GM12878 (cell line): ENCODE measurements at regions of chr15 and their contacts with region 1.

Region 1: DNA sequence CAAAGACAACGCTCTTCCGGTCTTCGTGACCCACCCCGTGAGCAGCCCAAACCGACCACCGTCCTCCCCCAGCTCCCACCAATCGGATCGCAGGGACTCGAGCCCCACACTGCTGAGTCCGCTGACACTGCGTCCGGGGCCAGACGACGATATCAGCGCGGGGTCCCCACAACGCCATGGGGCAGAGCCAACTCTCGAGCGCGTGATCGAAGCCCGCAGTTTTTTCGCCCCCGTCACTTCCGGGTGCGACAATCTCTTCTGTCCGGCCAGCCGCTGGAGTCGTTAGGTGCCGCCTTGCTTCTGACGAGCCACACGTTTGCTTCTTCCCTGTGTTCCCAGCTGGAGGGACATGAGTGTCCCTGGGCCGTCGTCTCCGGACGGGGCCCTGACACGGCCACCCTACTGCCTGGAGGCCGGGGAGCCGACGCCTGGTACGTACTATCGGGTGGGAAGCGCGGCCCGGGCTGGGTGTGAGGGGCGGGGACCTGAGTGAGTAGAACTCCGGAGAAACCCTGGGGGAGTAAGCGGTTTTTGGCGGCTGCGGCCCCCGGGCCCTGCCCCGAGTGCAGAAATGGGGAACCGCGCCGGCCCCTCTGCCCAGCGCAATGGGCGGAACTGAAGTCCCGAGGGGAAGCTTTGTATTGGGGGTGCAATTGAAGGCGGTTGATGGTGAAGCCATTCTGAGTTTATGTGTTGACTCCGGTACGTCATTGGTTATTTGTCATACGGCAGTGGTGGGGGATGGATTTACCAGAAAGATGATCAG is at the start of gene BLOC1S6:
- DNase-seq: peak; percentile 74
- ATAC-seq: peak; percentile 93
- H3K4me3 ChIP-seq: peak within 1 kb of the TSS; percentile 97
- H3K27ac ChIP-seq: peak within 1 kb of the TSS; percentile 85
- H3K4me1 ChIP-seq: peaks cover 4% of the 10 kb centered on the region; the same call in 1 of the 2 replicates
- H3K27me3 ChIP-seq: no peaks in the 10 kb centered on the region
- CTCF ChIP-seq: no peak
- EP300 ChIP-seq: peak in 1 of 2 experiments; percentile 10; a peak in 1 of 4 replicates
- POLR2A ChIP-seq: peak; percentile 99
- RAD21 ChIP-seq: no peak
- polyA plus RNA-seq, gene BLOC1S6: 13.5 to 16.9 TPM

Region 2: GRCh38 chr15:45442500-45443135 is 144.7 kb before region 1 on chr15:
- CTCF ChIA-PET with region 1: no interaction called
- POLR2A ChIA-PET with region 1: no interaction called
- RAD21 ChIA-PET with region 1: no interaction called
- SMC1A ChIA-PET with region 1: no interaction called
- in situ Hi-C with region 1: no loop called
- intact Hi-C with region 1: no loop called
- DNase-seq: no peak
- ATAC-seq: no peak
- H3K4me3 ChIP-seq: no peak overlapping the region
- H3K27ac ChIP-seq: no peak overlapping the region
- H3K4me1 ChIP-seq: peaks cover 8% of the 10 kb centered on the region; the same call in 1 of the 2 replicates
- H3K27me3 ChIP-seq: no peaks in the 10 kb centered on the region
- CTCF ChIP-seq: no peak
- EP300 ChIP-seq: no peak
- POLR2A ChIP-seq: no peak
- RAD21 ChIP-seq: no peak

Region 3: GRCh38 chr15:45522328-45523160 is 64.7 kb before region 1 on chr15 and contains the start of gene SLC30A4:
- CTCF ChIA-PET with region 1: interaction called, 4 read pairs
- POLR2A ChIA-PET with region 1: interaction called, 4 read pairs
- RAD21 ChIA-PET with region 1: no interaction called
- SMC1A ChIA-PET with region 1: interaction called, 12 read pairs
- in situ Hi-C with region 1: no loop called
- intact Hi-C with region 1: loop called (anchors 5 kb)
- DNase-seq: no peak
- ATAC-seq: peak; percentile 89
- H3K4me3 ChIP-seq: peak within 1 kb of the TSS; percentile 56; the same call in 1 of the 2 replicates
- H3K27ac ChIP-seq: no peak within 1 kb of the TSS
- H3K4me1 ChIP-seq: peaks cover 4% of the 10 kb centered on the region; the same call in 1 of the 2 replicates
- H3K27me3 ChIP-seq: no peaks in the 10 kb centered on the region; a peak in 1 of 4 replicates
- CTCF ChIP-seq: peak in 2 of 3 experiments; percentile 25 to 28; a peak in 3 of 6 replicates
- EP300 ChIP-seq: no peak
- POLR2A ChIP-seq: peak; percentile 41; the same call in 1 of the 2 replicates
- RAD21 ChIP-seq: no peak
- polyA plus RNA-seq, gene SLC30A4: 0.16 to 0.29 TPM

Region 4: DNA sequence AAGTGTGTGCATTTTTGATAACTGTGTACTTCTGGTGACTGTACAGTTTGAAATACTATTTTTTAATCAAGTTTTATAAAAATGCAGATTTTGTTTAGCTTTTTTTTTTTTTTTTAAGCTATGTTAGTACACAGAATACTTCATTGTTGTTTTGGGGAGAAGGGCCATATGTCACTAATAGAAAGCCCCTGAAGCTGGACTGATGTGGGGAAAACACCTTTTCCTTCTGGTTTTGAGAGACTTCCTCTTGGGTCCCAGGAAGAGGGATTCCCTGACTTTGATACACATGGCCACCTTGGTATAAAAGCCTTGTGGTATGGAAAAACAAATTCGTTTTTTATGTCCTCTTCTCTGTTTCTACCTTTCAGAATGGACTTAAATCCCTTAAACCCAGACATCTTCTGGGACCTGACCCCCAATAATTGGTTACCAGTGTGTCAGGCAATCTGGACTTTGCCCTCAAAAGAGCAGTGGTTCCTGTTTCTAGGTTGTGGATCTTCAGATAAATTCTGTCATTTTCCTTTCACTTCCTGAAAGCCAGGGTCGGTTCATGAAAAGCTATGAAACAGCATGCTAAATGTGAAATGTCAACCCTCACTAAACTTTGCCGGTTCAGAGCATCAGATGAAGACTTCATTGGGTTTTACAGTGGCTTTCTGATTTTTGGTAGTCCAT is 31.2 kb before region 1 on chr15:
- CTCF ChIA-PET with region 1: interaction called, 7 read pairs
- POLR2A ChIA-PET with region 1: interaction called, 17 read pairs
- RAD21 ChIA-PET with region 1: interaction called, 20 read pairs
- SMC1A ChIA-PET with region 1: interaction called, 24 read pairs
- in situ Hi-C with region 1: no loop called
- intact Hi-C with region 1: no loop called
- DNase-seq: peak; percentile 13
- ATAC-seq: peak; percentile 90
- H3K4me3 ChIP-seq: no peak overlapping the region
- H3K27ac ChIP-seq: no peak overlapping the region
- H3K4me1 ChIP-seq: no peaks in the 10 kb centered on the region
- H3K27me3 ChIP-seq: no peaks in the 10 kb centered on the region
- CTCF ChIP-seq: no peak
- EP300 ChIP-seq: peak; percentile 20 to 59; a peak in 1 of 4 replicates
- POLR2A ChIP-seq: no peak
- RAD21 ChIP-seq: no peak

Region 5: DNA sequence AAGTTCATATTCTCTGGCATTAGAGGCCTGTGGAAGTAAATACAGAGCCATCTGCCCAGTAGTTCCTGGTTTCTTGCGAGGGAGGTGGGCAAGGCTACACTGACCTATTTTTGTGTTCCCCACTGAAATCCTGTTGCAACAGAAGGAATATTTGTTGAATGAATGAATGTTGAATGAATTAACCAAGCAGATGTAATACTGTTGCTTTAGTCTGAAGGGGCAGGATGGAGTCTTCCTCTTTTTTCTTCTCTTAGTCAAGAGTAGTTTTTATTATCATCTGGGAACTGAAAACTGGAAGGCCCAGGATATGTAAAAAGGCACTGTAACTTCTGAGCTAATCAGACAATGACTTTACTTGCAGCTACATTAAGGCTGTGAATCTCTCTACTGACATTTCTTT is 17.0 kb after region 1 on chr15:
- CTCF ChIA-PET with region 1: interaction called, 7 read pairs
- POLR2A ChIA-PET with region 1: interaction called, 5 read pairs
- RAD21 ChIA-PET with region 1: interaction called, 11 read pairs
- SMC1A ChIA-PET with region 1: interaction called, 35 read pairs
- in situ Hi-C with region 1: no loop called
- intact Hi-C with region 1: no loop called
- DNase-seq: no peak
- ATAC-seq: no peak
- H3K4me3 ChIP-seq: no peak overlapping the region
- H3K27ac ChIP-seq: peak overlapping the region; percentile 40
- H3K4me1 ChIP-seq: peaks cover 14% of the 10 kb centered on the region
- H3K27me3 ChIP-seq: no peaks in the 10 kb centered on the region
- CTCF ChIP-seq: no peak
- EP300 ChIP-seq: no peak
- POLR2A ChIP-seq: no peak
- RAD21 ChIP-seq: no peak

Region 6: DNA sequence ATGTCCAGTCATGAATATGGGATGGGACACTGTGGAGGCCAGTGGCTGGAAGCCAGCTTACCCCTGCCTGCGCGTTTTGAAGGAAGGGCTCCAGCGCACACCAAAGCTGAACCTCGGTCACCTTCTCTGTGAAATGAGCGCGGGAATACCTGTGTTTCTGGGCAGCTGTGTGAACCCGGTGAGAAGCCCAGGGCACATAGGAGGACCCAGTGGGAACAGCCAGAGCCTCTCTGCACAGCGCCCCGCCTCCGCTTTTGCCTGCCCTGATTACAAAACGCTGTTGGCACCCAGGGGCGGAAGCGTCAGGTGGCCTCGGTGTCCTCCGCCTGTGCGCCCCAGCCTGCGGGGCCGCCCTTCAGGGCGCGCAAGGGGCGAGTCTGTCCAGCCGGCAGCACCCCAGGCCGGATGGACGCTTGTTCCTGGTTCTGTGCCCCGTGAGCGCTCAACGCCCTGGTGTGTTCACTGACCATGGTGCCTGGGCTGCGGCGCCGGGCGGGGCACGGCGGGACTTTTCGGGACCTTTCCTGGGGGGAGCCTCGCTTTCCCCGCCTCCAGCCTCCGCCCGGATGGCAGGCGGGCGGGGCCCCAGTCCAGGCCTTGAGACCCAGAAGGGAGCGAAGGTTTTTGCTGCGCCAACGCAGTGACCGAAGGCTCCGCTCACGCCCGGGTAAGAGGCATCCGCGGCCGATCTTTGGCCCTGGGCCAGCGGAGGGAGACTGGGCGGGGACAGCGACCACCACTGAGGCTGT is 47.3 kb after region 1 on chr15 and contains the start of gene SQOR:
- CTCF ChIA-PET with region 1: interaction called, 3 read pairs
- POLR2A ChIA-PET with region 1: interaction called, 3 read pairs
- RAD21 ChIA-PET with region 1: interaction called, 5 read pairs
- SMC1A ChIA-PET with region 1: interaction called, 7 read pairs
- in situ Hi-C with region 1: no loop called
- intact Hi-C with region 1: loop called (anchors 2 kb)
- DNase-seq: peak; percentile 59
- ATAC-seq: peak; percentile 86
- H3K4me3 ChIP-seq: peak within 1 kb of the TSS; percentile 86
- H3K27ac ChIP-seq: peak within 1 kb of the TSS; percentile 74
- H3K4me1 ChIP-seq: peaks cover 30% of the 10 kb centered on the region
- H3K27me3 ChIP-seq: no peaks in the 10 kb centered on the region
- CTCF ChIP-seq: no peak
- EP300 ChIP-seq: 0 out of 4 replicates have a peak, but pooled peaks of 1 of the 2 experiments have one; percentile 8
- POLR2A ChIP-seq: peak; percentile 88
- RAD21 ChIP-seq: no peak
- polyA plus RNA-seq, gene SQOR: 14.5 to 25.6 TPM

Region 7: DNA sequence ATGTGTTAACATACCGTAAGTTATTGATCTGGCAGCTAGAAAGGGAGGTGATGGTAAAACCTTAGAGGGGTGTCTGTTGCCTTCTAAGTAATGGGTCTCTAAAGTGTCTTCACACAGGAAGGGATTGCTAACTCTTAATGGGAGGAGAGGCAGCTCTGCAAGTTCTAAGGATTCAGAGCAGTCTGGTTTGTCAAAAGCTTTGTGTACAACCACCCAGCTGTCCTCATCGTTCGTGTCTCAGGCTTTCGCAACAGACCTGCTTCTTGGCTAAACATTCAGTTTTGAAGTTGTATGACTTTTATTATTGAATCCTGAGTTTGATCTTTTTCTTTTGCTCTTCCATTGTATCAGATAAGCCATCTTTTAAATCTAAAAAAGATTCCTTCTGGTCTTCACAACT is 452.4 kb after region 1 on chr15:
- CTCF ChIA-PET with region 1: no interaction called
- POLR2A ChIA-PET with region 1: no interaction called
- RAD21 ChIA-PET with region 1: no interaction called
- SMC1A ChIA-PET with region 1: no interaction called
- in situ Hi-C with region 1: no loop called
- intact Hi-C with region 1: no loop called
- DNase-seq: no peak
- ATAC-seq: no peak
- H3K4me3 ChIP-seq: no peak overlapping the region
- H3K27ac ChIP-seq: no peak overlapping the region
- H3K4me1 ChIP-seq: no peaks in the 10 kb centered on the region
- H3K27me3 ChIP-seq: no peaks in the 10 kb centered on the region
- CTCF ChIP-seq: no peak
- EP300 ChIP-seq: no peak
- POLR2A ChIP-seq: no peak
- RAD21 ChIP-seq: no peak